GM12878 (cell line): ENCODE measurements at regions of chr22 and their contacts with region 1.

Region 1: DNA sequence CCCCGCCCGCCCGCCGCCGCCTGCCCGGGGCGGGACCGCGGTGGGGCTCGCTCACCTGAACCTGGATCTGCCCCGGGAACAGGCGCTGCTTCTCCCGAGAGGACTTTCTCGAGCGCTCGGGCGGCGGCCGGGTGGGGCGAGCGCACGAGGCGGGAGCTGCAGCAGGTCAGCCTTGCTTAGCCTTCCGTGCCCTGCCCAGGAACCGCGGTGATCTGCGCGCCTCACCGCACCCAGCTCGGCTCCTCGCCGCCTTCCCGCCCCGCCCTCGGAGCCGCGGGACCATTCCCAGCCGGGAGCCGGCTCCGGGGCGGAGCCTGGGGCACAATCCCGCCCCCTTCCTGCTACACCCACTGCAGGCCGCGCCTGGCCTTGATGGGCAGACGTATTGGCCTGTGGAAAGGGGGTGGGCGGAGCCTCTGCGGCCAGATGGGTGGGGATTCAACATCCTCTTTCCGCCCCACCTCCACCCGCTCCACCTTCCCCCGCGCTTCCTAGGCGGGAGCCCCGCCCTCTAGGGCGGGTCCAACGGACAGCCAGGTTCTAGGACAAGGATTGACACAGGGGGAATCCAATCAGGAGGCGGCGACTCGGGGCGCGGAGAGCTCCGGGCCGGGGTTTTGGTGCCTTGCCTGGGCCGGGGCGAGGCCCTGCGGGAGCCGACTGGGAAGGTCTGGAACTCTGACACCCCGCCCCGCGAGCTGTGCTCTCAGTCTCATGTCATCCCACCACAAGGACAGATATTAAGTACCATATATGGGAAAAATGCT is at the start of gene MYH9:
- DNase-seq: peak; percentile 96
- ATAC-seq: peak; percentile 79
- H3K4me3 ChIP-seq: peak within 1 kb of the TSS; percentile 74
- H3K27ac ChIP-seq: peak within 1 kb of the TSS; percentile 88
- H3K4me1 ChIP-seq: peaks cover 8% of the 10 kb centered on the region
- H3K27me3 ChIP-seq: no peaks in the 10 kb centered on the region
- CTCF ChIP-seq: no peak
- EP300 ChIP-seq: no peak
- POLR2A ChIP-seq: peak; percentile 93
- RAD21 ChIP-seq: no peak
- polyA plus RNA-seq, gene MYH9: 5.1 to 8.1 TPM

Region 2: GRCh38 chr22:35914665-35915476 is 473.1 kb before region 1 on chr22:
- CTCF ChIA-PET with region 1: no interaction called
- POLR2A ChIA-PET with region 1: no interaction called
- RAD21 ChIA-PET with region 1: no interaction called
- SMC1A ChIA-PET with region 1: no interaction called
- in situ Hi-C with region 1: no loop called
- intact Hi-C with region 1: no loop called
- DNase-seq: no peak
- ATAC-seq: no peak
- H3K4me3 ChIP-seq: no peak overlapping the region
- H3K27ac ChIP-seq: no peak overlapping the region
- H3K4me1 ChIP-seq: no peaks in the 10 kb centered on the region
- H3K27me3 ChIP-seq: peaks cover 0 to 2% of the 10 kb centered on the region in 2 experiments; a peak in 2 of 4 replicates
- CTCF ChIP-seq: no peak
- EP300 ChIP-seq: no peak
- POLR2A ChIP-seq: no peak
- RAD21 ChIP-seq: no peak

Region 3: DNA sequence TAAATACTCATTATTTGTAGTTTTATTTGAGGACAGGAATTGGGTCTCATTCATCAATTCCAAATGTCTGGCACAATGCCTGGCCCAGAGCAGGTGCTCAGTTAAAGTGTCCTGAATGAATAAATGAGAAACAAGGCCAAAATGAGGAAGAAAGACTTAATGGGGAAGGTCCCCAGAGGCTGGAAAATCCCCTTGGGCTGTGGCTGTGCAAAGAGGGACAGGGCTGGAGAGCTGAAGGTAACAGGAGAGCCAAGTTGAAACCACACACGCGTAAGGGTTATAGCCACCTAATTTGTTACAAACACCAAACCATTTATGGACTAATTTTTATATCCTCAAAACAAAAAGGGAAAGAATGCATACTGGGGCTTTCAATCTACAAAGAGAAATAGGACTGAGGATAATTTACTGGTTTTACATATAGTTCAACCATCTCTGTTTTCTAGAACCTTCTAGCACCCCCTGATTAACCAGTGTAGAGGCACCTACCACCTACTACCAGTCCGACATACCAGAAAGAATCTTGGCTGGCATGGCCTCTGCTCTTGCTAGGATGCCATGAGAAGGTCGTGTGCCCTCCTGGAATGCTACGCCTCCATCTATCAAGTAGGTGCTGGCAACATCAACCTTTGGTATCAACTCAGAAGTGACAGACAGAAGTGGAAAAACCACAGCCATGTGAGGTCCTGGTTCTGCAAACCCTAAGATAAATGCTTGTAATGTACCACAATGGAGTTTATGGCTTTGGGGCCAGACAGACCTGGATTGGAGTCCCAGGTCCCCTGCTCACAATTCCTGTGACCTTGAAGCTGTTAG is 28.5 kb before region 1 on chr22:
- CTCF ChIA-PET with region 1: no interaction called
- POLR2A ChIA-PET with region 1: interaction called, 21 read pairs
- RAD21 ChIA-PET with region 1: interaction called, 6 read pairs
- SMC1A ChIA-PET with region 1: interaction called, 15 read pairs
- in situ Hi-C with region 1: no loop called
- intact Hi-C with region 1: no loop called
- DNase-seq: peak; percentile 86
- ATAC-seq: peak; percentile 88
- H3K4me3 ChIP-seq: no peak overlapping the region
- H3K27ac ChIP-seq: peak overlapping the region; percentile 39
- H3K4me1 ChIP-seq: peaks cover 90% of the 10 kb centered on the region
- H3K27me3 ChIP-seq: no peaks in the 10 kb centered on the region
- CTCF ChIP-seq: no peak
- EP300 ChIP-seq: peak; percentile 75 to 76; a peak in 2 of 4 replicates
- POLR2A ChIP-seq: no peak
- RAD21 ChIP-seq: no peak

Region 4: GRCh38 chr22:36365020-36365411 is 22.9 kb before region 1 on chr22:
- CTCF ChIA-PET with region 1: interaction called, 4 read pairs
- POLR2A ChIA-PET with region 1: interaction called, 21 read pairs
- RAD21 ChIA-PET with region 1: interaction called, 9 read pairs
- SMC1A ChIA-PET with region 1: interaction called, 20 read pairs
- in situ Hi-C with region 1: no loop called
- intact Hi-C with region 1: no loop called
- DNase-seq: no peak
- ATAC-seq: peak; percentile 85
- H3K4me3 ChIP-seq: no peak overlapping the region
- H3K27ac ChIP-seq: peak overlapping the region; percentile 58
- H3K4me1 ChIP-seq: peaks cover 74% of the 10 kb centered on the region
- H3K27me3 ChIP-seq: no peaks in the 10 kb centered on the region
- CTCF ChIP-seq: no peak
- EP300 ChIP-seq: peak in 1 of 2 experiments; percentile 50; a peak in 1 of 4 replicates
- POLR2A ChIP-seq: 0 out of 2 replicates have a peak, but pooled peaks have one; percentile 33
- RAD21 ChIP-seq: peak; percentile 12; the same call in 1 of the 2 replicates

Region 5: DNA sequence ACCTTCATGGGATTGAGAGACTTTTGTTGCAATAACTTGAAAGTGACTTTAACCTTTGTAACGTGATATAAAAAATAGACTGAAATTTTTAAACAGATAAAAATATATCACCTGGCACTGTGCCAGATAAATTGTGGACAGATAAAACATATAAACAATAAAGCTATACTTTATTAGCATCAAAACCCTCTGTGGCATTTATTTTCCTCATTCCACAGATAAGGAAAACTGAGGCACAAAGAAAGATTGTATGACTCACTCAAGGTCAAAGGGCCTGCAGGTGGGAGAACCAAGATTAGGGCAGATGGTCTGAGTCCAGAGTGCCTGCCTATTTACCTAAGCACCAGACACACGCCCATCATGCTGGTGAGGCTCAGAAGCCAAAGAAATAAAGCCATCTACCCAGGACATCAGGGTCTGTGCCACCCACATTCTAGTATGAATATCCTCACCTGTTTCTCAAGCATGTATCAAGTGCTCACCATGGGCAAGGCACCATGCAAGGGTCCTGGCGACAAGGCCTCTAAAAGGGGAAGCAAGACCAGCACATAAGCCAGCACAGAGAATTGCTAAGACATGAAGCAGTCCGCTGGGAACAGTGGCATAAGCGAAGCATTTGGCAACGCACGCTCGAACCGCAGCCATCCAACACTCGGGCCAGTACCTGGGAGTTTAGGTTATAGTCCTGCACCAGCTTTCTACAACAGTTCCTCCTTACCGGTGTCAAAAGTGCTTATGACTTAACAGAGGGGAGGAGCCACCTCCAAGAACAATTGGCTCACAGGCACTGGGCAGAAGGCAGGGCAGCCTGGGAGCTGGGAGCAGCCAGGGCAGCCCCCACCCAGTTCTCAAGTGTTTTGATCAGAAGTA is 17.8 kb before region 1 on chr22:
- CTCF ChIA-PET with region 1: interaction called, 4 read pairs
- POLR2A ChIA-PET with region 1: interaction called, 21 read pairs
- RAD21 ChIA-PET with region 1: interaction called, 9 read pairs
- SMC1A ChIA-PET with region 1: interaction called, 20 read pairs
- in situ Hi-C with region 1: no loop called
- intact Hi-C with region 1: no loop called
- DNase-seq: no peak
- ATAC-seq: peak; percentile 64
- H3K4me3 ChIP-seq: peak overlapping the region; percentile 20; the same call in 1 of the 2 replicates
- H3K27ac ChIP-seq: peak overlapping the region; percentile 1
- H3K4me1 ChIP-seq: peaks cover 73% of the 10 kb centered on the region
- H3K27me3 ChIP-seq: no peaks in the 10 kb centered on the region
- CTCF ChIP-seq: no peak
- EP300 ChIP-seq: no peak
- POLR2A ChIP-seq: no peak; the same call in 1 of the 2 replicates
- RAD21 ChIP-seq: no peak

Region 6: GRCh38 chr22:36454916-36455570 is 67.1 kb after region 1 on chr22:
- CTCF ChIA-PET with region 1: interaction called, 5 read pairs
- POLR2A ChIA-PET with region 1: interaction called, 5 read pairs
- RAD21 ChIA-PET with region 1: interaction called, 5 read pairs
- SMC1A ChIA-PET with region 1: interaction called, 5 read pairs
- in situ Hi-C with region 1: no loop called
- intact Hi-C with region 1: loop called (anchors 2 kb)
- DNase-seq: peak; percentile 50
- ATAC-seq: peak; percentile 80
- H3K4me3 ChIP-seq: peak overlapping the region; percentile 83
- H3K27ac ChIP-seq: peak overlapping the region; percentile 73
- H3K4me1 ChIP-seq: peaks cover 37% of the 10 kb centered on the region
- H3K27me3 ChIP-seq: no peaks in the 10 kb centered on the region
- CTCF ChIP-seq: peak in 2 of 3 experiments; percentile 10 to 23; a peak in 2 of 6 replicates
- EP300 ChIP-seq: no peak; a peak in 1 of 4 replicates
- POLR2A ChIP-seq: peak; percentile 82
- RAD21 ChIP-seq: peak; percentile 30; the same call in 1 of the 2 replicates